H1 (cell line): ENCODE measurements at regions of chr12 and their contacts with region 1.

Region 1: DNA sequence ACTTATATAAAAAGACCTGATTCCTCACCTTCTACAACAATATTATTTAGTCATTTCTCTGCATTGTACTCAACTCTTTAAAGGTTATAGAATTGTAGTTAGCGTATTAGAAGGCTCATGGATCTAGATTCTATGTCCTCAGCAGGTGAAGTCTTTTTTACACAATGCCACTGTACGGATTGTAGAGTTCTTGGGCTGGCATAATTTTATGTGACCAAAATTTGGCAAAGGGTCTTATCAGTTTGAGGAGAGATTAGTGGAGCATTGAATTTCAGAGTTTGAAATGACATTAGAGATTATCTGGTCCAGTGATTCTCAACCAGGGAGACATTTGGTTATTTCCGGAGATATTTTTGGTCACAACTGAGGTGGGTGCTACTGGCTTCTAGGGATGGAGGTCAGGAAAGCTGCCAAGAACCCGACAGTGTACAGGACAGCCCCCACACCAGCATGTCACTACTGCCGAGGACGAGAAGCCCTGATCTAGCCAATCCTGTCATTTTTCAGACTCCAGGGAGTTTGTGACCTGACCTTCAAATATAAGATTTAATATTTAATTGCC is 63.9 kb downstream of the BICD1 start:
- DNase-seq: no peak
- H3K4me3 ChIP-seq: peak overlapping the region in 1 of 4 experiments; percentile 17; a peak in 1 of 8 replicates
- H3K27ac ChIP-seq: no peak overlapping the region
- H3K4me1 ChIP-seq: peaks cover 0 to 13% (median 10%) of the 10 kb centered on the region in 4 experiments
- H3K27me3 ChIP-seq: no peaks in the 10 kb centered on the region
- CTCF ChIP-seq: no peak
- EP300 ChIP-seq: no peak
- POLR2A ChIP-seq: no peak
- RAD21 ChIP-seq: no peak

Region 2: GRCh38 chr12:31890295-31891285 is 279.9 kb before region 1 on chr12:
- CTCF ChIA-PET with region 1: no interaction called
- POLR2A ChIA-PET with region 1: no interaction called
- DNase-seq: no peak
- H3K4me3 ChIP-seq: no peak overlapping the region
- H3K27ac ChIP-seq: no peak overlapping the region
- H3K4me1 ChIP-seq: no peaks in the 10 kb centered on the region
- H3K27me3 ChIP-seq: no peaks in the 10 kb centered on the region; a peak in 1 of 7 replicates
- CTCF ChIP-seq: no peak
- EP300 ChIP-seq: no peak
- POLR2A ChIP-seq: no peak
- RAD21 ChIP-seq: no peak

Region 3: DNA sequence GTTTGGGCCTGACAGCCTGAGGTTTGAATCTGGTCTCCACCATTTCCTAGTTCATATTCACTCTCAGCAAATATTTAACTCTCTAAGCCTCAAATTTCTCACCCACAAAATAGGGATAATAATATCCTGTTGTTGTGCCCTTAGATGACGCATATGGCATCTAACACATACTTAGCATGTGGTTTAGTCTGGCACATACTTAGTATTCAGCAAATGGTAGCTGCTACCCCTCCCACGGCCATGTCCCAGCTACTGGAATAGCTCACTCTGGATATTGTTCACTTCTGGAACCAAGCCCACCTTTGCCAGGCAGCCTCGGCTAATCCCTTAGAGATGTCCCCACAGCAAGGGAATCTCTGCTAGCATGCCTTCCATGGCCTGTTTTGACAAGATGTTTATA is 10.6 kb before region 1 on chr12:
- CTCF ChIA-PET with region 1: interaction called, 3 read pairs
- POLR2A ChIA-PET with region 1: interaction called, 10 read pairs
- DNase-seq: no peak
- H3K4me3 ChIP-seq: no peak overlapping the region
- H3K27ac ChIP-seq: no peak overlapping the region
- H3K4me1 ChIP-seq: peaks cover 0 to 9% (median 5%) of the 10 kb centered on the region in 4 experiments; a peak in 6 of 7 replicates
- H3K27me3 ChIP-seq: no peaks in the 10 kb centered on the region
- CTCF ChIP-seq: no peak
- EP300 ChIP-seq: no peak
- POLR2A ChIP-seq: no peak
- RAD21 ChIP-seq: no peak

Region 4: GRCh38 chr12:32248441-32249140 is 78.1 kb after region 1 on chr12:
- CTCF ChIA-PET with region 1: no interaction called
- POLR2A ChIA-PET with region 1: no interaction called
- DNase-seq: no peak
- H3K4me3 ChIP-seq: no peak overlapping the region
- H3K27ac ChIP-seq: peak overlapping the region; percentile 9; the same call in 1 of the 2 replicates
- H3K4me1 ChIP-seq: peaks cover 4 to 16% (median 8%) of the 10 kb centered on the region in 4 experiments; a peak in 5 of 7 replicates
- H3K27me3 ChIP-seq: no peaks in the 10 kb centered on the region
- CTCF ChIP-seq: no peak
- EP300 ChIP-seq: no peak
- POLR2A ChIP-seq: no peak
- RAD21 ChIP-seq: no peak

Region 5: GRCh38 chr12:32423559-32423958 is 253.0 kb after region 1 on chr12:
- CTCF ChIA-PET with region 1: no interaction called
- POLR2A ChIA-PET with region 1: no interaction called
- DNase-seq: no peak
- H3K4me3 ChIP-seq: no peak overlapping the region; a peak in 1 of 8 replicates
- H3K27ac ChIP-seq: no peak overlapping the region
- H3K4me1 ChIP-seq: peaks cover 11 to 13% (median 13%) of the 10 kb centered on the region in 4 experiments
- H3K27me3 ChIP-seq: no peaks in the 10 kb centered on the region
- CTCF ChIP-seq: no peak
- EP300 ChIP-seq: no peak
- POLR2A ChIP-seq: no peak
- RAD21 ChIP-seq: no peak